GM12878 (cell line): ENCODE measurements at regions of chr5 and their contacts with region 1.

Region 1: DNA sequence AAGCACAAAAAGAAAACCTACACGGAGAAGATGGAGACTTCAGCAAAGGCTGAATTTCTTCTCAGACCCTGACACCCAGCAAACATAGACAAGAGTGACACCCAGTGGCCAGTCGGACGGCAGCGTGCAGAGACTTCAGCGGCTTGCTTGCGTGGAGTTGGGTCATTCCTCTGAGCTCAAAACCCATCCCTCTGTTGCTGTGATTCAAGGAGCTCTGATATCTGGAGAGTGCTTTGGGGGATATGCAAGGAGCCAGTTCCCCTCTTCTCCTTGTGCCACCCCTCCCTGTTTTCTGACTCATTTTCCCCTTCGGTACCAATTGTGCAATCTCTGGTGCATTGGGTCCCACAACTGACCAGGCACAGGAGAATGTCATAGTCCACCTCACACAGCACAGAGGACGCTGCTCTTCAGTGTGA is 27.5 kb downstream of the SH3TC2 start:
- DNase-seq: no peak
- ATAC-seq: peak; percentile 98
- H3K4me3 ChIP-seq: no peak overlapping the region
- H3K27ac ChIP-seq: no peak overlapping the region
- H3K4me1 ChIP-seq: no peaks in the 10 kb centered on the region
- H3K27me3 ChIP-seq: no peaks in the 10 kb centered on the region
- CTCF ChIP-seq: peak; percentile 82 to 91 (median 88)
- EP300 ChIP-seq: no peak
- POLR2A ChIP-seq: no peak
- RAD21 ChIP-seq: peak; percentile 87

Region 2: DNA sequence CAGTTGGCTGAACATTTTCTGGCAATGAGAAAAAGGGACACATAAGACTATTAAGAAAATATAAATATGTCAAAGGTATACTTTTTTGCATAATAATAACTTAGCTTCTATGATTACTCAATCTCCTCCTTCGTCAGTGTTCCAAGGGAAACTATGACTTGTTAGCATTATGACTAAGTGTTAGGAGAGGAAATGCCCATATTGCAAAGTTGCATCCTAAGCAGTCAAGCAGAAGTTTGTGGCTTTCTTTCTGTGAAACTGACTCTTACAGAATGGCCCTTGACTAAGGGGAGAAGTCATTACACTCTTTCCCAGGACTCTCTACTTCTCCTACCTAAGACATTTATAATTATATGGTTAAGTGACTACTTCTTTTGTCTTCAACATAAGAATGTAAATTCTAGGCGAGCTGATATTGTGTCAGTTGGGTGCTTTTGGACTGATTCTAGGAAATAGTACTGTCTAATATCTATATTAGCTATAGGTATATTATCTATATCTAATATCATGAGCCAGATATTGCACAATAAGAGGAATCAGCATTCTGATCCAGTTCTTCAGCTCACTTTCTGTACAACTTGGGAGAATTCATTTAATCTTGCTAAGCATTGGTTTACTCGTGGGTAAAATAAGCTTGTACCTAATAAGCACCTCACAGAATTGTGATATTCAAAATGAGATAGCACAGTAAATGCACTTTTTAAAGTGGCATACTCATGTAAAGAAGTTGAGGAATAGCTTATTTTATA is 849.0 kb before region 1 on chr5:
- CTCF ChIA-PET with region 1: no interaction called
- POLR2A ChIA-PET with region 1: no interaction called
- RAD21 ChIA-PET with region 1: no interaction called
- SMC1A ChIA-PET with region 1: no interaction called
- in situ Hi-C with region 1: loop called (anchors 25 kb)
- intact Hi-C with region 1: loop called (anchors 10 kb)
- DNase-seq: no peak
- ATAC-seq: peak; percentile 81
- H3K4me3 ChIP-seq: no peak overlapping the region
- H3K27ac ChIP-seq: no peak overlapping the region
- H3K4me1 ChIP-seq: no peaks in the 10 kb centered on the region
- H3K27me3 ChIP-seq: no peaks in the 10 kb centered on the region
- CTCF ChIP-seq: no peak
- EP300 ChIP-seq: no peak
- POLR2A ChIP-seq: no peak
- RAD21 ChIP-seq: no peak

Region 3: GRCh38 chr5:148725677-148726076 is 309.7 kb before region 1 on chr5:
- CTCF ChIA-PET with region 1: interaction called, 335 read pairs
- POLR2A ChIA-PET with region 1: no interaction called
- RAD21 ChIA-PET with region 1: interaction called, 91 read pairs
- SMC1A ChIA-PET with region 1: interaction called, 101 read pairs
- in situ Hi-C with region 1: no loop called
- intact Hi-C with region 1: no loop called
- DNase-seq: no peak
- ATAC-seq: no peak
- H3K4me3 ChIP-seq: no peak overlapping the region
- H3K27ac ChIP-seq: no peak overlapping the region
- H3K4me1 ChIP-seq: no peaks in the 10 kb centered on the region
- H3K27me3 ChIP-seq: no peaks in the 10 kb centered on the region
- CTCF ChIP-seq: no peak
- EP300 ChIP-seq: no peak
- POLR2A ChIP-seq: no peak
- RAD21 ChIP-seq: no peak

Region 4: DNA sequence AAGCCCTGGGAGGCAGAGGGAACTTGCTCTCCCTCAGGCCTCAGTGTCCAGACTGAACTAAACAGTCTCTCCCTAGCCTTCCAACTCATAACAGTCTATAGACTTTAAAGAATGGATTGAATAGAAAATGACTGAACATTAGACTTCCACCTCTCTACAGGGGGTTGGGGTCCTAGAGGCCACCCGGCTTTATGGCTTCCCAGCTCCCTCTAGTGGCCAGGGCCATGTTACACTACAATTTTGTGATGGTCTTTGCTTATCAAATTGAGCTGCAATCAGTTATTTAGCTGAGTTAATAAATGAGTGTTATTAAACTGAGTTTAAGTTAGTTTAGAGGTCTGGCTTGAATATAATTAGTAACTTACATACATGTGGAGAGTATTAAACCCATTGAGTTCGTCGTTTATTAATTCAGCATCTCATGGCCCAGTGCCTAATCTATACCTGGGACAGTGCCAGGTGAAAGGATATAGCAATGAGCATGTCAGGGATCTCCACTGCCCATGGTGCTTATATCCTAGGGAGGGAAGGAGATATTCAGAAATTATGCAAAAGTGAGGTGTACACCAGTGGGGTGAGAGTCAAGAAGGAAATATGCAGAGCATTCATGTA is 77.7 kb before region 1 on chr5:
- CTCF ChIA-PET with region 1: interaction called, 17 read pairs
- POLR2A ChIA-PET with region 1: no interaction called
- RAD21 ChIA-PET with region 1: interaction called, 9 read pairs
- SMC1A ChIA-PET with region 1: interaction called, 7 read pairs
- in situ Hi-C with region 1: no loop called
- intact Hi-C with region 1: loop called (anchors 2 kb)
- DNase-seq: no peak
- ATAC-seq: peak; percentile 82
- H3K4me3 ChIP-seq: no peak overlapping the region
- H3K27ac ChIP-seq: no peak overlapping the region
- H3K4me1 ChIP-seq: no peaks in the 10 kb centered on the region
- H3K27me3 ChIP-seq: no peaks in the 10 kb centered on the region
- CTCF ChIP-seq: peak; percentile 75 to 87 (median 77)
- EP300 ChIP-seq: no peak
- POLR2A ChIP-seq: no peak
- RAD21 ChIP-seq: peak; percentile 83

Region 5: GRCh38 chr5:149114403-149115312 is 79.3 kb after region 1 on chr5:
- CTCF ChIA-PET with region 1: interaction called, 15 read pairs
- POLR2A ChIA-PET with region 1: no interaction called
- RAD21 ChIA-PET with region 1: interaction called, 14 read pairs
- SMC1A ChIA-PET with region 1: interaction called, 10 read pairs
- in situ Hi-C with region 1: no loop called
- intact Hi-C with region 1: loop called (anchors 5 kb)
- DNase-seq: no peak
- ATAC-seq: peak; percentile 97
- H3K4me3 ChIP-seq: no peak overlapping the region
- H3K27ac ChIP-seq: no peak overlapping the region
- H3K4me1 ChIP-seq: no peaks in the 10 kb centered on the region
- H3K27me3 ChIP-seq: no peaks in the 10 kb centered on the region
- CTCF ChIP-seq: peak; percentile 66 to 74 (median 73)
- EP300 ChIP-seq: no peak
- POLR2A ChIP-seq: no peak
- RAD21 ChIP-seq: peak; percentile 69